ENCODE measurements at regions of chr3 and their contacts with region 1.

Region 1: DNA sequence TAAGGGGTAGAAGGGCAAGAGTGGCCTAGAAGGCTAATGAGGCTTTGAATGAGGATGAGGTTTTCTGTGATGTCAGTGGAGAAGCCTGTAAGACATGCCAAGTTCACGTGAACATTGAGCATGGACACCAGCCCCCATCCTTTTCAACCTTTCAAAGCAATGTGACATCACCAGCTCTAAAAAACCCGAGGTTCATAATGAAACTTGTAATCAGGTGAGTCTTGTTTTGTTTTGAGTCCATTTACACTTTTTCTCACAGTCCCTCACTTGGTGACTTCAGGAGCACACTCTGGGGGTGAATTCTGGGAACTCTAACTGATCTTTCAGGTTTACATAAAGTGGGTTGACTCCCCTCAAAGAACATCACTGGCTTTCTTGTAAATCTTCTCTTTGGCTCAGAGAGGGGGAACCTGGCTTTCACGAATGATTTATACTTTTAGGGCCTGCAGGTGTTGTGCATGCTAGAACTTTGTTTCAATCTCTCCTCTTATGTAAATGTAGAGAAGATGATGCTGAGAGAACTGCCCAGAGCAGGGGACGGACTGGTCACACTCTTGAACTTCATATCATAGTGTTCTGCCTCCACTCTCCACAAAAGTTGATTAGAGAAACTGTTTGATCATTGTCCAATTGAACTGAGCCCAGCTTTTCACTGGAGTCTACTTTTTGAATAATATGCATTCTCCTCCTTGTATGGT is 224.7 kb upstream of the SATB1 start:
- DNase-seq: peak in 8 of 9 donors; percentile 21 to 53 (median 33)
- ATAC-seq: peak; percentile 41
- H3K4me3 ChIP-seq: no peak overlapping the region
- H3K4me3 Mint-ChIP-seq: peak overlapping the region in 8 of 10 donors; percentile 14 to 66 (median 28)
- H3K27ac ChIP-seq: no peak overlapping the region
- H3K27ac Mint-ChIP-seq: peak overlapping the region; percentile 17 to 89 (median 56)
- H3K4me1 ChIP-seq: peaks cover 0 to 12% of the 10 kb centered on the region in 2 donors
- H3K4me1 Mint-ChIP-seq: peaks cover 22 to 77% (median 30%) of the 10 kb centered on the region in 7 donors
- H3K27me3 ChIP-seq: no peaks in the 10 kb centered on the region
- H3K27me3 Mint-ChIP-seq: no peaks in the 10 kb centered on the region

Region 2: DNA sequence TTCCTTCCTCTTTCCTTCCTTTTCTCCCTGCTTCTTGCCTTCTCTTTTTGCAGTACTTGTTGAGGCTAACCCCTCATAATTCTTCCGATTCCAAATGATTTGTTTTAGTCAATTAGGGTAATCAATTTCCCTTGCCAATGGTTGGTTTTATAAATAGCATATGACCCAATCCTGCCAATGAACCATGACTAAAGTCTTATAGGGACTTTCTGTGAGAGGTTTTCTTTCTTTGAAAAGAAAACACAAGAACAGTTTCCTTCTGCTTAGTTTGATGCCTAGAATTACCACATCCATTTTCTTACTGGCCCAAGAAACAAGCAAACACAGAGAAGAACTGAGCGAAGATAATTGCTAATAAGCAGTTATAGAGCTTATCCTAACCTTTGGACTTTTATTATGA is 67.8 kb after region 1 on chr3:
- CTCF ChIA-PET with region 1: no interaction called
- POLR2A ChIA-PET with region 1: no interaction called
- intact Hi-C with region 1: loop called in 1 of 2 experiments (anchors 1 kb)
- DNase-seq: peak in 1 of 9 donors; percentile 14
- ATAC-seq: no peak
- H3K4me3 ChIP-seq: no peak overlapping the region
- H3K4me3 Mint-ChIP-seq: peak overlapping the region in 8 of 10 donors; percentile 28 to 78 (median 60)
- H3K27ac ChIP-seq: no peak overlapping the region
- H3K27ac Mint-ChIP-seq: peak overlapping the region; percentile 20 to 95 (median 77)
- H3K4me1 ChIP-seq: peaks cover 43 to 50% of the 10 kb centered on the region in 2 donors
- H3K4me1 Mint-ChIP-seq: peaks cover 50 to 85% (median 71%) of the 10 kb centered on the region in 7 donors
- H3K27me3 ChIP-seq: no peaks in the 10 kb centered on the region
- H3K27me3 Mint-ChIP-seq: no peaks in the 10 kb centered on the region

Region 3: DNA sequence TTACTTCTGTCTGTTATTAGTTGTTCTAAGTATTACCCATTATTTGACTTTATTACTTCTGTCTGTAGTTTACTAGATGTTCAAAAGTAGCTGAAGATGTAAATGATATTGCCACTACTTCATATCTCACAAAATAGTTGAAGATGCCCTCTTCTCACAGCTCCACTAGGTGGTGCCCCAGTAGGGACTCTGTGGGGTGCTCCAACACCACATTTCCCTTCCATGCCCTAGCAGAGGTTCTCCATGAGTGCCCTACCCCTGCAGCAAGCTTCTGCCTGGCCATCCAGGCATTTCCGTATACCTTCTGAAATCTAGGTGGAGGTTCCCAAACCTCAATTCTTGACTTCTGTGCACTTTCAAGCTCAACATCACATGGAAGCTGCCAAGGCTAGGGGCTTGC is 579.3 kb after region 1 on chr3:
- CTCF ChIA-PET with region 1: no interaction called
- POLR2A ChIA-PET with region 1: no interaction called
- intact Hi-C with region 1: no loop called
- DNase-seq: no peak
- ATAC-seq: no peak
- H3K4me3 ChIP-seq: no peak overlapping the region
- H3K4me3 Mint-ChIP-seq: no peak overlapping the region
- H3K27ac ChIP-seq: no peak overlapping the region
- H3K27ac Mint-ChIP-seq: no peak overlapping the region
- H3K4me1 ChIP-seq: no peaks in the 10 kb centered on the region
- H3K4me1 Mint-ChIP-seq: peaks cover 0 to 5% (median 0%) of the 10 kb centered on the region in 7 donors
- H3K27me3 ChIP-seq: no peaks in the 10 kb centered on the region
- H3K27me3 Mint-ChIP-seq: peaks cover 0 to 11% (median 8%) of the 10 kb centered on the region in 5 donors

Measured in naive thymus-derived CD4-positive, alpha-beta T cell (primary cell).